T-cell (primary cell): ENCODE measurements at regions of chr4 and their contacts with region 1.

Region 1: DNA sequence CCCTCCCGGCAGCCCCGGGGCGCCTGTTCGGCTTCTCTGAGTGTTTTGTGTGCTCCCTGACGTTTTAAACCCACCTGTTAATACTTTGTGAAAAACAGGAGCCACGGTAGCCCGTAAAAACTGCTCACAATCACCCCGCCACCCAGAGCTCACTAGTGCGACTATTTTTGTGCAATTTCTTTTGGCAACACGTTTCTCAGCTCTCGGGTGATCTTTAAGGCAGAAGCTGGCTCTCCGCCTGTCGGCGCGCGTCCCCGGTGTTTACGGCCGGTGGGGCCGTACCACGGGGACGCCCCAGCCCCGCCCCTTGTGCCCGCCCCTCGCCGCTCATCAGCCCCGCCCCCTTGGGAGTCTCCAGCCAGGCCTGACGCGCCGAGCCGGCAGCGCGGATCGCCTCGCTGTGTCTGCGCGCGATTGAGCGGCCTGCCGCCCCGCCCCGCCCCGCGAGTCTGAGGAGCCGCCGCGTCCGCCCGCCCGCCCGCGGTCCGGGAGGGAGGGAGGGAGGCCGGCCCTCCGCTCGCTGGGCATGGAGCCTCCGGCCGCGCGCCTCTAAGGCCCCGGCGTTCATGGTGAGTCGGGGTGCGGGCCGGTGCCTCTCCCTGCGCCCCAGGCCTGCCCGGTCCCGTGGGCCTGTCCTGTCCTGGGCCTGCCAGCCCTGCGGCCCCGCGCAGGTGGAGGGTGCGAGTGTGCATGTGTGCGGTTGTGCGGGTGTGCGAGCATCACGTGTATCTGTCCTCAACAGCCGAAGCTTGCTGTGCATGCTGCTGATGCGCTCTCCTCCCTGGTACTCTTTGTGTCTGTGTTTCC is 56.2 kb upstream of the TADA2B start:
- DNase-seq: peak; percentile 86 to 97 (median 91)
- ATAC-seq: peak; percentile 91 to 96 (median 93)
- H3K4me3 ChIP-seq: peak overlapping the region; percentile 66 to 82
- H3K4me3 Mint-ChIP-seq: peak overlapping the region; percentile 94 to 97 (median 95)
- H3K27ac ChIP-seq: peak overlapping the region; percentile 83
- H3K27ac Mint-ChIP-seq: peak overlapping the region; percentile 97
- H3K4me1 ChIP-seq: peaks cover 19 to 57% of the 10 kb centered on the region in 2 experiments
- H3K4me1 Mint-ChIP-seq: peaks cover 77 to 85% (median 82%) of the 10 kb centered on the region in 3 donors
- H3K27me3 ChIP-seq: no peaks in the 10 kb centered on the region
- H3K27me3 Mint-ChIP-seq: no peaks in the 10 kb centered on the region

Region 2: DNA sequence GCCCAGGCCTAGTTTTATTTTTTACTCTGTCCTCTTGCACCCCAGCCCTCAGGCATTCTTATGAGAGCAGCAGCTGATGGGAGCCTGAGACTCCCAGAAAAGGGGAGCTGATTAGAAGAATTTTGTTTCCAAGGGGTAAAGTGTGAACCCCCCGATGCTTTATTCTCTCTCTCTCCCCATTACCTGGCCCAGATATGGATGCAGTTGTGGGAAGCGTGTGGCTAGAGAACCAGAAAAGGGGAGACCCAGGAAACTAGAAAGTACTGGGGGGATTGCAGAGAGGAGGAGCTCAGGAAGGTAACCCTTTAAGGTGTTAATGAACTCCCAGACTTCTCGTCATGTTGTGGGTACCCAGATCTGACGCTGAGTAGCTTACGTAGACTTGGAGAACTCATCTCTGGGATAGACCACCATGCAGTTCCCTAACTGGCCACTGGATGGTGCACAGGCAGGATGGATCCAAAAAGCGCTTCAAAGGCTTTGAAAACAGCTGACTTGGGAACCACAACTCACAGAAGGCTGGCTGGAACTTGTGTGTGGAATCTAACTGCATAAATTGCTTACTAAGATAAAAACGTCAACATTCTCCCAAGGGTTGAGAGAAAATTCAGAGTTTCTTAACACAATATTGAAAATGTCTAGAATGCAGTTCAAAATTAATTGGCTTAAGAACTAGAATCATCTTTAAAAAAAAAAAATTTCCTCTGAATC is 12.7 kb before region 1 on chr4:
- CTCF ChIA-PET with region 1: interaction called, 3 to 15 read pairs
- POLR2A ChIA-PET with region 1: no interaction called
- DNase-seq: peak; percentile 48 to 89 (median 71)
- ATAC-seq: peak; percentile 88 to 98 (median 94)
- H3K4me3 ChIP-seq: no peak overlapping the region
- H3K4me3 Mint-ChIP-seq: no peak overlapping the region
- H3K27ac ChIP-seq: no peak overlapping the region
- H3K27ac Mint-ChIP-seq: peak overlapping the region; percentile 56 to 79
- H3K4me1 ChIP-seq: peaks cover 0 to 9% of the 10 kb centered on the region in 2 experiments
- H3K4me1 Mint-ChIP-seq: peaks cover 23 to 41% (median 31%) of the 10 kb centered on the region in 3 donors
- H3K27me3 ChIP-seq: no peaks in the 10 kb centered on the region
- H3K27me3 Mint-ChIP-seq: no peaks in the 10 kb centered on the region